Psoas muscle (tissue), 8 donors: ENCODE measurements at regions of chrX and their contacts with region 1.

Region 1: GRCh38 chrX:125327891-125328290 is 8.2 kb downstream of the TEX13C start:
- DNase-seq: no peak
- ATAC-seq: no peak
- H3K4me3 ChIP-seq: no peak overlapping the region
- H3K27ac ChIP-seq: no peak overlapping the region
- H3K4me1 ChIP-seq: no peaks in the 10 kb centered on the region
- H3K27me3 ChIP-seq: no peaks in the 10 kb centered on the region
- CTCF ChIP-seq: no peak

Region 2: GRCh38 chrX:125132285-125132684 is 195.6 kb before region 1 on chrX:
- intact Hi-C with region 1: loop called in 1 of 2 experiments (anchors 5 kb)
- DNase-seq: no peak
- ATAC-seq: no peak
- H3K4me3 ChIP-seq: no peak overlapping the region
- H3K27ac ChIP-seq: no peak overlapping the region
- H3K4me1 ChIP-seq: no peaks in the 10 kb centered on the region
- H3K27me3 ChIP-seq: no peaks in the 10 kb centered on the region
- CTCF ChIP-seq: no peak

Region 3: GRCh38 chrX:125150231-125150630 is 177.7 kb before region 1 on chrX:
- intact Hi-C with region 1: no loop called
- DNase-seq: no peak
- ATAC-seq: no peak
- H3K4me3 ChIP-seq: no peak overlapping the region
- H3K27ac ChIP-seq: no peak overlapping the region
- H3K4me1 ChIP-seq: no peaks in the 10 kb centered on the region
- H3K27me3 ChIP-seq: no peaks in the 10 kb centered on the region
- CTCF ChIP-seq: no peak